GM13977 (cell line): ENCODE measurements at regions of chr10 and their contacts with region 1.

Region 1: GRCh38 chr10:96743988-96744585 is 23.8 kb upstream of the PIK3AP1 start:
- DNase-seq: no peak
- CTCF ChIP-seq: peak; percentile 56

Region 2: DNA sequence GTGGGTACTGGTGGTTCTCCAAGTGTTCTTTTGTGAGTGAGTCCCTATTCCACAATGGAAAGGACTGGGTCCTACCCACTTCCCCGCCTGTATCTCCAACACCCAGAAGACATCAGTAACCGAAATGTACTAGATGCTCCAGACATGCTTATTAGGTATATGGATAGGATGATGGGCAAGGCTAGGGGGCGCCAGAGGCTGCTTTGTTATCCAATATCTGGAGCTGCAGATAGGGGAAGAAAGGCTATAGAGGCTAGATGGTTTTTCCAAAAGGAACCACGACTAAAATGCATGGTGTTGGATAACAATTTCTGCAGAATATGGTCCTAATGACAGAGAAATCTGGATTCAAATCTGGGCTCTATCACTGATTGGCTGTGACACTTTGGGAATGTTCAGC is 101.1 kb before region 1 on chr10:
- in situ Hi-C with region 1: loop called (anchors 10 kb)
- DNase-seq: peak; percentile 49
- CTCF ChIP-seq: peak; percentile 79

Region 3: DNA sequence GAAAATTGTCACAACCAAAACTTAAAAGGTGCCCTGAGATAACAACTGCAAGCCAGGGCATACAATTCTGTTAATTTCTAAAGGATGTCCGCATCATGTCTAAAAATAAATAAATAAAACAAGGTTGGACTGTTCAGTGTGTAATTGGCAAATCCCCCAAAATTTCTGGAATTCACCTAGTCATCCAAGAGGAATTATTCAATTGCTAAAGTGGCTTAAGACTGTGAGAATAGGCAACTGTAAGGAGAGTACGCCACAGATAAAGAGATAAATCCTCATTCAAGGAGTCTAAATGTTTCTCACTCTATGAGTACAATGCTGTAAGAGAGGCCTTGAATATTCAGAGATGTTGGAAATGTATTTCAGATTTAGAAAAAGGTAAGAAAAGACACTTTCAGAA is 61.0 kb before region 1 on chr10:
- in situ Hi-C with region 1: no loop called
- DNase-seq: no peak
- CTCF ChIP-seq: no peak